ENCODE measurements at regions of chr9 and their contacts with region 1.

Region 1: GRCh38 chr9:19925817-19926503 is 137.1 kb upstream of the SLC24A2 start:
- DNase-seq: peak; percentile 87
- ATAC-seq: peak; percentile 98
- H3K4me3 Mint-ChIP-seq: peak overlapping the region; percentile 60
- H3K27ac Mint-ChIP-seq: peak overlapping the region; percentile 22
- H3K4me1 Mint-ChIP-seq: peaks cover 15% of the 10 kb centered on the region
- H3K27me3 Mint-ChIP-seq: peaks cover 16% of the 10 kb centered on the region

Region 2: DNA sequence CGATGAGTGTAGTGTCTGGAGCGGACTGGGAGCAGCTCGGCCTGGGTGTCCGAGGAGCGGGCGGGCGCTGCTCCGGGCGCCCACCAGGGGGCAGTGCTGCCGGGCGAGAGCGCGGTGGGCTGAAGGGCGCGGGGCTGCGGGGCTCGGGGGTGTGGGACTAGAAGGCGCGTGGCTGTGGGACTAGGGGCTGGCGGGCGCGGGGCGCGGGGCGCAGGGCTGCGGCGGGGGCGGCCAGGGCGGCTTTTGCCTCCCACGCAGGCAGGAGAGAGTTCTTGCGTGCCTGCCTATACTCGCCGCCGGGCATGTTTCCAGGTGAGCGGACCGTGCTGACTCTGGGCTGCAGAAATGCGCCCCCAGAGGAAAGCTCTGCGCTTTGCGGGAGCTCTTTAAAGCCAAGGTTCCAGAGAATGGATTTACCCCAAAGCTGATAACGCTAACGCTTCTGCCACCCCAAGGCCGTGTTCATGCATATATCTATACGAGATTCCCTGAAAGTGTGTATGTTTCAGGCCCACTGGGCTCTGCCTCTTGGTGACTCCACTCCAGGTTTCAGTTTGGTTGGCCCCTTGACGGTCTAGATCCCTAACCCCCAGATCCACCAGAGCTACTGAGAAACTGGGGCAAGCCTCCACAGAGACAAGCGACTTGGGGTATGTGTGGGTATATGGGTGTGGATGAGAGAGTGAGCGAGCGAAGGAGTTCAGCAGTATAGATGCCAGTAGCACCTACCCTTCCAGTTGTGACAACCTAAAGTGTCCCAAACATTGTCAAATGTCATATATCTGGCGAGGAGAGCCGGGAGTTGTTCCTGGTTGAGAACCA is 461.0 kb before region 1 on chr9:
- CTCF ChIA-PET with region 1: interaction called, 3 read pairs
- POLR2A ChIA-PET with region 1: no interaction called
- intact Hi-C with region 1: loop called (anchors 2 to 5 kb)
- DNase-seq: peak; percentile 83
- ATAC-seq: peak; percentile 89
- H3K4me3 Mint-ChIP-seq: peak overlapping the region; percentile 77
- H3K27ac Mint-ChIP-seq: peak overlapping the region; percentile 71
- H3K4me1 Mint-ChIP-seq: peaks cover 7% of the 10 kb centered on the region
- H3K27me3 Mint-ChIP-seq: no peaks in the 10 kb centered on the region

Region 3: GRCh38 chr9:19493174-19493811 is 432.7 kb before region 1 on chr9:
- CTCF ChIA-PET with region 1: no interaction called
- POLR2A ChIA-PET with region 1: no interaction called
- intact Hi-C with region 1: loop called in 1 of 2 experiments (anchors 5 kb)
- DNase-seq: peak; percentile 63
- ATAC-seq: peak; percentile 68
- H3K4me3 Mint-ChIP-seq: peak overlapping the region; percentile 27
- H3K27ac Mint-ChIP-seq: peak overlapping the region; percentile 40
- H3K4me1 Mint-ChIP-seq: peaks cover 15% of the 10 kb centered on the region
- H3K27me3 Mint-ChIP-seq: peaks cover 2% of the 10 kb centered on the region

Region 4: DNA sequence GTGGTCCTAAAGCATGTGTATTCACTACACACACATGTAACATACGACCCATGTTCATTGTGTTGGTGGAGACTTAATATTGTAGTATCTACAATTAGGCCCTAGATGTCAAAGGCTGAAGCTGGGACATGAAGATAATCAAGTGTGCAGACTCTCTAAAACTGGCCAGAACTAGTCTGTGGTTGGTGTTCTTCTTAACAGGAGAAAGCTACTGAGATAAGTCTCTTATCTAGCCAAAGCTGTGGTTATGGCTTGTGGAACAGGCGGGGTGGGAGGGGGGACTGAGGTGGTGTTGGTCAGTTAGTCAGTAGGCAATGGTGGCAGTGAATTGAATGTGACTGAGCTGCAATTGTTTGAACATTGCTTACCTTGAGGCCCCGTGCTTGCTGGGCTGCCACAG is 24.4 kb before region 1 on chr9:
- CTCF ChIA-PET with region 1: no interaction called
- POLR2A ChIA-PET with region 1: no interaction called
- intact Hi-C with region 1: no loop called
- DNase-seq: no peak
- ATAC-seq: no peak
- H3K4me3 Mint-ChIP-seq: no peak overlapping the region
- H3K27ac Mint-ChIP-seq: no peak overlapping the region
- H3K4me1 Mint-ChIP-seq: no peaks in the 10 kb centered on the region
- H3K27me3 Mint-ChIP-seq: peaks cover 4% of the 10 kb centered on the region

Region 5: DNA sequence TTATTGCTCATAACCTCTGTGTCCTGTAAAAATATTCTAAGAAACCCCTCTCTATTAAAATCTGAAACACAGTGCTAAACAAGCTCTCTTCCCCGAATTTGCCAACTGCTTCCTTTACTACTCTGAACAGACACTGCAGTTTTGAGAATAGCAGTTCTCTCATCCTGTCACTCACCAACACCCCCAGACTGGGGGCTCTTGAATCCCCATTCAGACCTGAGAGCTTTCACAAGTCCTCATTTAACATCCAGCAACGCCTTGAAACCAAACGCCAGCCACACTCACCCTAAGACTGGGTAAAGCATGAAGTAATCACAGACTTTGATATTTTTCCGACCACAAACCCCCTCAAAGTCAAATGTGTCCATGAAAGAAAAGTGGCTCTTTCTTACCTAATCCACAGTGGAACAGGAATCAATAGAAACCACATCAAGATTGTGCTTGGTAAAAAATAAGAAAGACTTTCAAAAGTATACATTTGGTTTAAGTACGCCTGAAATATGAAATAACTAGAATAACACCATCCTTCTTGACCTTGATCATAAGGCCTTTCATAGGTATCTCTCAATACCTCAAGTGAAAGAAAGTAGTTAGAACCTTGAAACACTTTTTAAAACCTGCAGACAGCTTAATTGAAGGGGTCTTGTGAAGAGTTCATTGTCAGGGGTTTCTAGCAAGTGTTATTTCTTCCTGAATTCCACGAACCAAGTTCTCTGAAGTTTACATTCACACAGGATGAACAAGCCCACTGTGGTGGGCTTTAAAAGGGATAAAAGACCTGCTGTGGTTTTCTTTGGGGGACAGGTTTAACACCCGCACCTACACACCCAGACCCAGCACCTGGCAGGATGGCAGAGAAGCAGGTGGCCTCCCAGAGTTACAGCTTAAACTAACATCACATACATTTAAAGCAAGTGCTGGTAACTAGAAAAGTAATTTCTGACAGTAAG is 283.7 kb after region 1 on chr9:
- CTCF ChIA-PET with region 1: no interaction called
- POLR2A ChIA-PET with region 1: no interaction called
- intact Hi-C with region 1: loop called in 1 of 2 experiments (anchors 5 kb)
- DNase-seq: peak; percentile 77
- ATAC-seq: peak; percentile 79
- H3K4me3 Mint-ChIP-seq: peak overlapping the region; percentile 31
- H3K27ac Mint-ChIP-seq: peak overlapping the region; percentile 84
- H3K4me1 Mint-ChIP-seq: peaks cover 25% of the 10 kb centered on the region
- H3K27me3 Mint-ChIP-seq: no peaks in the 10 kb centered on the region

Region 6: DNA sequence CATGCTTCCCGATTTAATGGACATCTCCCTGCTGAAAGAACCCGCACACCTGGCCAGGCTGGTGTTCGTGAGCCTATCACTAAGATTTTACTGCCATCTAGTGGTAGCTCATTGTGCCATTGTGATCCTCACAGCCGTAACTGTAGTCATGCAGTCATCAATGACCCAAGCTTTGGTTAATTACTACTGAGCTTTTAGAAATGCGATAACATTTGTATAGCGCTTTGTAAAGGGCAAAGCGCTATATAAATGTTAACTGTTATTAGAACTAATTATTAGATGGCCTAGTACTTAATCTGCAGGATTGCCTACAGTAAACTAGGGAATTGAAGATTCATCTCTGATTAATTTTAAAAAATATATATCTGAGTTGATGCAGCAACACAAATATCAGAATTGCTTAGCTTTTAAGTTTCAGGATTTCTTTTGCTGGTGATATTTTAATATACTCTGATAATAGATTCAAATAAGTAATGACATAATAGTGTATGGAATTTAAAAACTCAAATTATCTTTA is 1015.3 kb after region 1 on chr9:
- CTCF ChIA-PET with region 1: interaction called, 12 read pairs
- POLR2A ChIA-PET with region 1: no interaction called
- intact Hi-C with region 1: loop called (anchors 1 kb)
- DNase-seq: peak; percentile 68
- ATAC-seq: peak; percentile 98
- H3K4me3 Mint-ChIP-seq: no peak overlapping the region
- H3K27ac Mint-ChIP-seq: no peak overlapping the region
- H3K4me1 Mint-ChIP-seq: peaks cover 3% of the 10 kb centered on the region
- H3K27me3 Mint-ChIP-seq: no peaks in the 10 kb centered on the region

Measured in activated CD4-positive, alpha-beta T cell treated with anti-CD3 and anti-CD28 coated beads for 36 hours (primary cell).